Calu3 (cell line): ENCODE measurements at regions of chr16 and their contacts with region 1.

Region 1: GRCh38 chr16:29700253-29700987 is 21.4 kb downstream of the QPRT start:
- DNase-seq: peak; percentile 87
- H3K4me3 Mint-ChIP-seq: no peak overlapping the region
- H3K27ac Mint-ChIP-seq: peak overlapping the region; percentile 18
- H3K4me1 Mint-ChIP-seq: peaks cover 16% of the 10 kb centered on the region
- H3K27me3 Mint-ChIP-seq: peaks cover 30% of the 10 kb centered on the region
- CTCF ChIP-seq: peak; percentile 93

Region 2: GRCh38 chr16:29710227-29711219 is 10.1 kb after region 1 on chr16:
- CTCF ChIA-PET with region 1: interaction called, 14 read pairs
- intact Hi-C with region 1: no loop called
- DNase-seq: peak; percentile 54
- H3K4me3 Mint-ChIP-seq: peak overlapping the region; percentile 24
- H3K27ac Mint-ChIP-seq: peak overlapping the region; percentile 34
- H3K4me1 Mint-ChIP-seq: peaks cover 18% of the 10 kb centered on the region
- H3K27me3 Mint-ChIP-seq: peaks cover 10% of the 10 kb centered on the region
- CTCF ChIP-seq: peak; percentile 54

Region 3: DNA sequence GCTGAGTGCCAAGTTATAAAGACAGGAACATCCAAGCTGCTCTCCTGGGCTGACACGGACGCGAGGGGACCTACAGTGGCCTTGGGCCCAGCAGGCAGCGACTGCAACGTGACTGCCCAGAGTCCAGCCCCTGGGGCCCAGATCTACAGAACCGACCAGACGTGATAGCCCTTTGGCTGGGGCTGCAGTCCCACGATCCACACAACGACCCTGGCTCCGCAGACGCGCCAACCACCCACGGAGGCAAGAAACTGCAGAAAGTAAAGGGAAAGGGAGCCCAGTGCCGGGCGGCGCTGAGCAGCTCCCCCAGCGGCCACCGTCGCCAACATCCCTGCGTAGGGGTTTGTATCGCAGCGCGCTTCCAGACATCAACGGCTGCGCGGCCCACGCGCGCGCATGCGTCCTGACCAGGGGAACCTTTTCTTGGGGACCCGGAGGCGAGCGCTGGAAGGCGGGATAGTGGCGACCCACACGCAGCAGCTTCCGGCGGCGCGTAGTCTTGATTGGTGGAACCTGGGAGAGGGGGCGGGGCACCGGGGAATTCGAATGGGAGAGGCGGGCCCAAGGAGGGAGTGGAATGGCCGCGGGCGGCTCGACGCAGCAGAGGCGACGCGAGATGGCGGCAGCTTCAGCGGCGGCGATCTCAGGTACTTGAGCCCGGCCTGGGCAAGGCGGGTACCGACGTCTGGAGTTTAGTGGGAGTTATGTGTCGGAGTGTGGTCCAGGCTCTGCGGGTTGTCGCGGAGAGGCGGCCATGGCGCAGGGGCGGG is 89.9 kb after region 1 on chr16 and contains the start of gene KIF22:
- CTCF ChIA-PET with region 1: interaction called, 11 read pairs
- intact Hi-C with region 1: no loop called
- DNase-seq: peak; percentile 100
- H3K4me3 Mint-ChIP-seq: peak within 1 kb of the TSS; percentile 87
- H3K27ac Mint-ChIP-seq: peak within 1 kb of the TSS; percentile 80
- H3K4me1 Mint-ChIP-seq: peaks cover 25% of the 10 kb centered on the region
- H3K27me3 Mint-ChIP-seq: no peaks in the 10 kb centered on the region
- CTCF ChIP-seq: peak; percentile 84
- total RNA-seq, gene KIF22: 130 and 134 TPM in 2 replicates

Region 4: GRCh38 chr16:29848420-29849297 is 148.2 kb after region 1 on chr16:
- CTCF ChIA-PET with region 1: interaction called, 30 read pairs
- intact Hi-C with region 1: loop called (anchors 1 kb)
- DNase-seq: peak; percentile 85
- H3K4me3 Mint-ChIP-seq: no peak overlapping the region
- H3K27ac Mint-ChIP-seq: peak overlapping the region; percentile 65
- H3K4me1 Mint-ChIP-seq: no peaks in the 10 kb centered on the region
- H3K27me3 Mint-ChIP-seq: no peaks in the 10 kb centered on the region
- CTCF ChIP-seq: peak; percentile 90

Region 5: DNA sequence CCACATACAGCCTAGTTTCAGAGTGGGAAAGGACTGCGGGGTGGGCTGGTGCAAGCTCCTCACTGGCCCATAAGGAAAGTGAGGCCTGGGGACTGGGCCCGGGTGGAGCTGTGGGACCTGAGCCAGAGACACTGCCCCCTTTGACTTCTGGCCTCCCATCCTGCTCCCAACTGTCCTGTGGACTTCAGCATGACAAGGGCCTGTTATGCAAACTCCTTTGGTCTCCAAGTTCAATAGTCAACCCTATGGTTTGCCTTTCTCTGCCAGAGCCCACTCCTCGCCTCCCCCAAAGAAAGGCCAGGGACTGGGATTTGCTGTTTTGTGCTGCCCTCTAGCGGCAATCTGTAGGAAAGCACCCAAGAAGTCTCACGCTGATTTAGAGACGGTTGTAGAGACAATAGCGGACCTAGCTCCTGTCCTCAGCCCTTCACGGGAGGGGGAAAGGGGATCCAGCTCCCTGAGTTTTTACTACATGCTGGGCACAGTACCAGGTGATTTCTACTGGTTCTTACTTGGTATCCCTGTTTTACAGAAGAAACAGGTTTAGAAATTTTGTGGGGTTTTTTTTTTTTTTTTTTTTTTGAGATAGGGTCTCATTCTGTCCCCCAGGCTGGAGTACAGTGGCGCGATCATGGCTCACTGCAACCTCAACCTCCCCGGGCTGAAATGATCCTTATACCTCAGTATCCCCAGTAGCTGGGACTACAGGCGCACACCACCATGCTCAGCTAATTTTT is 331.8 kb after region 1 on chr16:
- CTCF ChIA-PET with region 1: interaction called, 12 read pairs
- intact Hi-C with region 1: no loop called
- DNase-seq: peak; percentile 74
- H3K4me3 Mint-ChIP-seq: peak overlapping the region; percentile 18
- H3K27ac Mint-ChIP-seq: no peak overlapping the region
- H3K4me1 Mint-ChIP-seq: peaks cover 9% of the 10 kb centered on the region
- H3K27me3 Mint-ChIP-seq: peaks cover 86% of the 10 kb centered on the region
- CTCF ChIP-seq: peak; percentile 93

Region 6: DNA sequence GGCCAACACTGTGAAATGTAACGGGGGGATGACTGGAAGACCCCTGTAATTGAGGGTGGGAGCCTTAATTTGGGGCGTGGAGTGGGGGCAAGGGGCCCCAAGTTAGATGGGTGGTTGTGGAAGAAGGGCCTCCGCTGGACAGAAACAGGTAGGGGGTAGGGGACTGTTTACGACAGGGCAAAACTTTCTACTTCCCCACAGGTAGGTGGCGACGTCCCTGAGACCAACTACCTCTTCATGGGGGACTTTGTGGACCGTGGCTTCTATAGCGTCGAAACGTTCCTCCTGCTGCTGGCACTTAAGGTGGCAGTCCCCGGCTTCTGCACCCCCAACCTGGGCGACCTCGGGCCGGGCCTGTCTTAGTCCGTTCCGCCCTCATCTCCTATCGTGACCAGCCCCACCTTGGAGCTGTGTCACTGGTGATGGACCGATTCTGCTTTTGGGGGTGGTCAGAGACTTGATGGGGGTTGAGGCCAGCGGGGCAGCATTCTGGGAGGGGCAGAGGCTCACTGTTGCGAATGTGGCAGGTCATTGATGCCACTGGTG is 382.2 kb after region 1 on chr16:
- CTCF ChIA-PET with region 1: no interaction called
- intact Hi-C with region 1: no loop called
- DNase-seq: no peak
- H3K4me3 Mint-ChIP-seq: no peak overlapping the region
- H3K27ac Mint-ChIP-seq: no peak overlapping the region
- H3K4me1 Mint-ChIP-seq: peaks cover 8% of the 10 kb centered on the region
- H3K27me3 Mint-ChIP-seq: no peaks in the 10 kb centered on the region
- CTCF ChIP-seq: peak; percentile 32